Mammary epithelial cell (primary cell): ENCODE measurements at regions of chrX and their contacts with region 1.

Region 1: DNA sequence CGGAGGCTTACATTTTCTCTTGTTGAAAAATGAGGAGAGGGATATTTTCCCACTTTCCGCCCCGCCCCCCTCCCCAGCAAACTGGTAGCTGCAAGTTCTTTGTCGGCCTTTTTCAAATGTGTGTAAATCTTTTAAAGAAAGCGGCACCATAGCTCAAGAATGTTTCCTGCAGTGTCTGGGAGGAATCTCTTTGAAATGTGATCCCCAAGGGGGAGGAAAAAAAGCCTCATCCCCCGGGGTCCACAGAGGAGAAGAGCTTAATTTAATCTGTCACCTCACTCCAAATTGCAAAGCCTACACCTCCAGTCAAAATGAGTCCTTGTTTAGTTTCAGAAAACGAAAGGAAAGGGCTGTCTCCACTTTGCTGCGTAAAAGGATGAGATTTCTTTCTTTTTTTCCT is 34.8 kb downstream of the ASMT start:
- DNase-seq: no peak
- H3K4me3 ChIP-seq: no peak overlapping the region
- H3K27ac ChIP-seq: no peak overlapping the region
- H3K4me1 ChIP-seq: no peaks in the 10 kb centered on the region
- H3K27me3 ChIP-seq: no peaks in the 10 kb centered on the region
- CTCF ChIP-seq: no peak

Region 2: GRCh38 chrX:1564750-1565683 is 84.6 kb before region 1 on chrX:
- CTCF ChIA-PET with region 1: no interaction called
- dilution Hi-C with region 1: no loop called
- in situ Hi-C with region 1: no loop called
- intact Hi-C with region 1: no loop called
- DNase-seq: no peak
- H3K4me3 ChIP-seq: no peak overlapping the region
- H3K27ac ChIP-seq: no peak overlapping the region
- H3K4me1 ChIP-seq: no peaks in the 10 kb centered on the region
- H3K27me3 ChIP-seq: no peaks in the 10 kb centered on the region
- CTCF ChIP-seq: no peak

Region 3: DNA sequence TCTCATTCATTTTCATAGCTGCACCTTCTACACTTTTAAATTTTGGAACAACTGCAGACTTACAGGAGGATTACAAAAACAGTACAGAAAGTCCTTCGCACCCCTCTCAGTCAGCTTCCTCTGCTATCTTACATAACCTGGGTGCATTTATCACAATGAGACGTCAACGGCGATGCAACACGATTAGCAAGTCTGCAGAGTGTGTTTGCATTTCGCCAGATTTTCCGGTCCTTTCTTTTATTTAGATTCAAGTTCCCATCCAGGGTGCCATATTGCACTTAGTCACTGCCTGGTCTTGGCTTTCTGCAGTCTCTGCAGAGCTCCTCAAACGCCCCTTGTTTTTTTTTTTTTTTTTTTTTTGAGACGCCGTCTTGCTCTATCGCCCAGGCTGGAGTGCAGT is 51.1 kb after region 1 on chrX:
- CTCF ChIA-PET with region 1: no interaction called
- dilution Hi-C with region 1: no loop called
- in situ Hi-C with region 1: no loop called
- intact Hi-C with region 1: no loop called
- DNase-seq: no peak
- H3K4me3 ChIP-seq: no peak overlapping the region
- H3K27ac ChIP-seq: no peak overlapping the region
- H3K4me1 ChIP-seq: no peaks in the 10 kb centered on the region
- H3K27me3 ChIP-seq: no peaks in the 10 kb centered on the region
- CTCF ChIP-seq: no peak

Region 4: GRCh38 chrX:2595258-2595657 is 945.6 kb after region 1 on chrX:
- CTCF ChIA-PET with region 1: no interaction called
- dilution Hi-C with region 1: no loop called
- in situ Hi-C with region 1: loop called in 1 of 2 experiments (anchors 10 kb)
- intact Hi-C with region 1: loop called (anchors 1 kb)
- DNase-seq: peak; percentile 78
- H3K4me3 ChIP-seq: no peak overlapping the region
- H3K27ac ChIP-seq: no peak overlapping the region
- H3K4me1 ChIP-seq: no peaks in the 10 kb centered on the region
- H3K27me3 ChIP-seq: no peaks in the 10 kb centered on the region
- CTCF ChIP-seq: no peak